Activated T-helper 1 cell treated with anti-CD3 and anti-CD28 coated beads, Interleukin-12 subunit alpha, Interleukin-12 subunit beta, Interleukin-2, Interleukin-4 antibody, amounts not matched to agents 30 ng/mL and 10 ng/mL and 1 ng/mL, durations not matched to agents 14 hours and 24 hours and 36 hours (primary cell): ENCODE measurements at regions of chr5 and their contacts with region 1.

Region 1: GRCh38 chr5:143824851-143825720 is 13.1 kb downstream of the HMHB1 start:
- DNase-seq: peak; percentile 73
- H3K4me3 Mint-ChIP-seq: no peak overlapping the region
- H3K27ac Mint-ChIP-seq: no peak overlapping the region
- H3K4me1 Mint-ChIP-seq: peaks cover 14% of the 10 kb centered on the region
- H3K27me3 Mint-ChIP-seq: peaks cover 1% of the 10 kb centered on the region

Region 2: DNA sequence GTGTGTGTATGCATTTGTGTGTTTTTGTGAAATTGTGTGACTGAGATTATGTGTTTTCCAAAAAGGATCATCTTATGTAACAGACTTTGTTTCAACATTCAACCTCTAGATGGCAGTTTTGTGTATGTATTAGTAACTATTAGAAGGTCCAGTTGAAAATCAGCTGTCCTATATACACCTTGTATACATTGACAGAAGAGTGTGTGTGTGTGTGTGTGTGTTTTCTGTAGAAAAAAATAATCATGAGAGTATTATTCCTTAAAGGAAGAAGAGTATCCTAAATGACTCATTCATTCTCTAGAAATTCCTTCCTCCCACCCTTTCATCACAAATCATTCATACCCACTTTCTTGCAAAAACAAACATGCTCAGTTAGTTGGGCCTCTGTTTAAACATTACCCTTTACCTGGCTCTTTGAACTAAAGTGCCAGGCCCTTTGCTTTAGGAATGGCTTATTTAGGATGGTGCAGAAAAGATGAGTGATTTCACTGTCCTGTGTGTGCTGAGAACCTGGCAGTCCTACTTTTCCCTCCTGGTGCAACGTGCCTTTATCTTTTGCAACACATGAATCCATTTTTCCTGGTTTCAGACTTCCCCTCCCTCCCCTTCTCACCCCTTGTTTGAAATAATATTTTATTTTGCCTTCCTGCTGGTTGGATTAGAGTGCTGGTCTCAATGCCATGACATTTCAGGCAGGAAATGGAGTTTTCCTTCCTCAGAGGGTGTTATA is 902.7 kb before region 1 on chr5:
- intact Hi-C with region 1: loop called (anchors 1 kb)
- DNase-seq: no peak
- H3K4me3 Mint-ChIP-seq: no peak overlapping the region
- H3K27ac Mint-ChIP-seq: no peak overlapping the region
- H3K4me1 Mint-ChIP-seq: peaks cover 49% of the 10 kb centered on the region
- H3K27me3 Mint-ChIP-seq: no peaks in the 10 kb centered on the region

Region 3: GRCh38 chr5:143101121-143101520 is 724.0 kb before region 1 on chr5:
- intact Hi-C with region 1: loop called (anchors 1 kb)
- DNase-seq: peak; percentile 13
- H3K4me3 Mint-ChIP-seq: peak overlapping the region; percentile 48
- H3K27ac Mint-ChIP-seq: peak overlapping the region; percentile 92
- H3K4me1 Mint-ChIP-seq: peaks cover 53% of the 10 kb centered on the region
- H3K27me3 Mint-ChIP-seq: no peaks in the 10 kb centered on the region

Region 4: GRCh38 chr5:143350751-143351603 is 474.1 kb before region 1 on chr5:
- intact Hi-C with region 1: loop called (anchors 5 kb)
- DNase-seq: no peak
- H3K4me3 Mint-ChIP-seq: no peak overlapping the region
- H3K27ac Mint-ChIP-seq: no peak overlapping the region
- H3K4me1 Mint-ChIP-seq: peaks cover 21% of the 10 kb centered on the region
- H3K27me3 Mint-ChIP-seq: no peaks in the 10 kb centered on the region

Region 5: GRCh38 chr5:143641549-143642356 is 183.3 kb before region 1 on chr5:
- intact Hi-C with region 1: no loop called
- DNase-seq: no peak
- H3K4me3 Mint-ChIP-seq: no peak overlapping the region
- H3K27ac Mint-ChIP-seq: no peak overlapping the region
- H3K4me1 Mint-ChIP-seq: no peaks in the 10 kb centered on the region
- H3K27me3 Mint-ChIP-seq: no peaks in the 10 kb centered on the region

Region 6: GRCh38 chr5:143679777-143680176 is 145.3 kb before region 1 on chr5:
- intact Hi-C with region 1: loop called (anchors 1 kb)
- DNase-seq: no peak
- H3K4me3 Mint-ChIP-seq: no peak overlapping the region
- H3K27ac Mint-ChIP-seq: no peak overlapping the region
- H3K4me1 Mint-ChIP-seq: peaks cover 18% of the 10 kb centered on the region
- H3K27me3 Mint-ChIP-seq: no peaks in the 10 kb centered on the region

Region 7: DNA sequence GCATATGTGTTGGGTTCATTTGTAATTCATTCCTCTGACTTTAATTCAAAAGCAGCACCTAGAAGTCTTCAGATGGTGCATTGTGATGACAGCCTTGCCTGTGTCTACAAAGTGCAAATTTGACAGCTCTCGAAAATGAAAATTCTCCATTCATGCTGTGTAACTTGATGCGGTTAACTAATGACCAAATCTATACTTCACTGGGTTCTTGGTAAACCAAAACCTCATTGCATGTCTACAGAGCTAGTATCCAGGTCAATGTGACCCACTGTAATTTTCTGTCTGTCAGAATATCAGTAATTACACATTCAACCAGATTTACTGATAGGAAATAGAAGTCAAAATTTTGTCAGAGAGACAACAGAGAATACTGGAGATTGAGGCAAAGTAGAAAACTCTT is 279.0 kb after region 1 on chr5:
- intact Hi-C with region 1: no loop called
- DNase-seq: no peak
- H3K4me3 Mint-ChIP-seq: no peak overlapping the region
- H3K27ac Mint-ChIP-seq: no peak overlapping the region
- H3K4me1 Mint-ChIP-seq: no peaks in the 10 kb centered on the region
- H3K27me3 Mint-ChIP-seq: peaks cover 5% of the 10 kb centered on the region

Region 8: GRCh38 chr5:144170276-144171024 is 345.4 kb after region 1 on chr5 and contains the starts of genes KCTD16 and YIPF5:
- intact Hi-C with region 1: loop called (anchors 1 kb)
- DNase-seq: peak; percentile 98
- H3K4me3 Mint-ChIP-seq: peak within 1 kb of the TSS; percentile 96
- H3K27ac Mint-ChIP-seq: peak within 1 kb of the TSS; percentile 80
- H3K4me1 Mint-ChIP-seq: peaks cover 45% of the 10 kb centered on the region
- H3K27me3 Mint-ChIP-seq: peaks cover 13% of the 10 kb centered on the region
- total RNA-seq, gene KCTD16: not detected in 2 replicates
- total RNA-seq, gene YIPF5: 34.2 and 37.9 TPM in 2 replicates

Region 9: GRCh38 chr5:144315994-144316634 is 491.0 kb after region 1 on chr5:
- intact Hi-C with region 1: no loop called
- DNase-seq: no peak
- H3K4me3 Mint-ChIP-seq: no peak overlapping the region
- H3K27ac Mint-ChIP-seq: no peak overlapping the region
- H3K4me1 Mint-ChIP-seq: no peaks in the 10 kb centered on the region
- H3K27me3 Mint-ChIP-seq: no peaks in the 10 kb centered on the region